CD4-positive, alpha-beta memory T cell (primary cell): ENCODE measurements at regions of chr4 and their contacts with region 1.

Region 1: DNA sequence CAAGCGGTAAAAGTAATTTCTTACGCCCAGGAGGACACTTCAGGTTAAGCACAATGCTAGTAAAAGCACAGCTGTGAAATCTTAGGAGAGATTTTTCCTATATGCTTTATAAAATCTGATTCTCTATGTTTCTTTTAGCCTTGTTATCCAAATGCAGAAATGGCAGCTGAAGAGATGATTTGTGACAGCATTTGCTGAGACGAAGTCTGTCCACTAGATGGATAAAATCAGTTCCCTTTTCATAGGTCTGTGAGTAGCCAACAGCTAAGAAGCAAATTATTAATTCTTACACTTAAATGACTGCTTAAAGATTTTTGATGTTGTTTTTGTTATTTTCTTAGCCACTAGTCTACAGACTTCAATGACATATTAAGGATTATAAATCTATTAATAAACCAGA is 5.3 kb downstream of the GPM6A start:
- DNase-seq: no peak
- H3K4me3 ChIP-seq: no peak overlapping the region
- H3K4me3 Mint-ChIP-seq: no peak overlapping the region
- H3K27ac ChIP-seq: no peak overlapping the region
- H3K27ac Mint-ChIP-seq: no peak overlapping the region
- H3K4me1 ChIP-seq: no peaks in the 10 kb centered on the region
- H3K4me1 Mint-ChIP-seq: no peaks in the 10 kb centered on the region
- H3K27me3 ChIP-seq: no peaks in the 10 kb centered on the region
- H3K27me3 Mint-ChIP-seq: no peaks in the 10 kb centered on the region

Region 2: DNA sequence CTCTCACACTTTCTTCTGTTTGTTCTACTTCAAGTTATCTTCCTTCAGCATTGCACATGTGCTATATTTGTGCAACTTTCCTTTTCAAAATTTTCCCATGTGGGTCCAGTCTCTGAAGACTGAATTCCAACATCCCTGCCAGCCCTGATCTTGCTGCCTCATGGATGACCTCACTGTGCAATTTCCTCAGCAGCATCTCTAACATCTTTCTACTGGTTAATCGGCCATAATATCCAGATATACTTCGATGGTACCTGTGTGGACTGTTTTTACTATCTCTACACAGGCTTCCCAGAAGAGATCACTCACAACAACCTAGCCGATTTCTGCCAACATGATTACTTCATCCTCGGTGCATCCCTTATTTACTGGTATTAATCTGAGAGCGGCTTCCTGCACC is 36.2 kb before region 1 on chr4:
- CTCF ChIA-PET with region 1: no interaction called
- POLR2A ChIA-PET with region 1: no interaction called
- intact Hi-C with region 1: no loop called
- DNase-seq: no peak
- H3K4me3 ChIP-seq: no peak overlapping the region
- H3K4me3 Mint-ChIP-seq: no peak overlapping the region
- H3K27ac ChIP-seq: no peak overlapping the region
- H3K27ac Mint-ChIP-seq: no peak overlapping the region
- H3K4me1 ChIP-seq: no peaks in the 10 kb centered on the region
- H3K4me1 Mint-ChIP-seq: no peaks in the 10 kb centered on the region
- H3K27me3 ChIP-seq: no peaks in the 10 kb centered on the region
- H3K27me3 Mint-ChIP-seq: no peaks in the 10 kb centered on the region

Region 3: DNA sequence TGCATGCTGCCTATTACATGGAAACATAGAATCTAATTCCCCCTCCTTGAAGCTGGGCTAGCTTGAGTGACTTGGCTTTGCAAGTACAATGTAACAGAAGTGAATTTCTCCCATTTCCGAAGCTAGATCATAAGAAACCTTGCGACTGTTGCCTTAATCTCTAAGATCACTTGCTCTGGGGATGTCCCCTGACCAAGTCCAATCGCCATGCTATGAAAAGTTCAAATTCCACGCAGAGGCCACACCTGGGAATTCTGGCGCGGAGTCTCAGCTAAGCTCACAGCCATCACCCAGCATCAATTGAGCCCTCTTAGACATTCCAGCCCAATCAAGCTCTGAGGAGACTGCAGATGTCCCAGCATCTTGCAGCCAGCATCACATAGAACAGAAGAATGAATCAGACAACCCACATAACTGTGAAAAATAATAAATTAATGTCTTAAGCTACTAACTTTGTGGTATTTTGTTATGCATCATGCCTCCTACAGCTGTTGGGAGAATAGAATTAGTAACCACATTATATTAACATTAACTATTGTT is 21.7 kb before region 1 on chr4:
- CTCF ChIA-PET with region 1: no interaction called
- POLR2A ChIA-PET with region 1: no interaction called
- intact Hi-C with region 1: loop called (anchors 1 kb)
- DNase-seq: no peak
- H3K4me3 ChIP-seq: no peak overlapping the region
- H3K4me3 Mint-ChIP-seq: no peak overlapping the region
- H3K27ac ChIP-seq: no peak overlapping the region
- H3K27ac Mint-ChIP-seq: no peak overlapping the region
- H3K4me1 ChIP-seq: no peaks in the 10 kb centered on the region
- H3K4me1 Mint-ChIP-seq: no peaks in the 10 kb centered on the region
- H3K27me3 ChIP-seq: no peaks in the 10 kb centered on the region
- H3K27me3 Mint-ChIP-seq: no peaks in the 10 kb centered on the region